Left lung (tissue), 14 donors: ENCODE measurements at regions of chr10 and their contacts with region 1.

Region 1: DNA sequence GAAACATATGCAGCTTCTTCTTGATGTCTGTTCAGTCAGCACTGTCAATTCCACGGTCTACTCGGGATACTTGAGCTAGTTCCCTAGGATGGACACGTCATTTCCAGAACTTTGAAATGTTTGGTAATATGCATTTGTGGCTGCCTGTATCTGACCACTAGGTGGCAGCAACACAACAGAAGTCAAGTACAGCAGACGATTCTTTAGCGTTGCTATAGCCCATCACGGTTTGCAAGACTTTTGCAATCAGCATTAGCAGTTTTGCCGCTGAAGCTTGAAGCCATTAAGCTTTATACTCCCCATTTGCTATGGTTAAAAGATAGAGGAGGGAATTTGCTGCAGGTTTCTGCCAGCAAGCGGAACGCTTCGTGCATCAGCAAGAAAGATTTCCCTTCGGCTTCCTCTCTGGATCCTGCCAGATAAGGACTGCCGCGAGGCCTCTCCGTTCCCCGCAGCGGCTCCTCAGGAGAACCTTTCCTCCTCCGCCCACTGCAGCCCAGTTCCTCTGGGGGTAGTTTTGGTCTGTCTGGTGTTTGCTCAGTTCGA is 63.5 kb downstream of the ABCC2 start:
- DNase-seq: peak; percentile 57 to 89 (median 80)
- ATAC-seq: peak; percentile 99
- H3K4me3 ChIP-seq: peak overlapping the region in 1 of 2 donors; percentile 16
- H3K27ac ChIP-seq: no peak overlapping the region
- H3K4me1 ChIP-seq: peaks cover 4 to 13% of the 10 kb centered on the region in 2 donors
- H3K27me3 ChIP-seq: no peaks in the 10 kb centered on the region
- CTCF ChIP-seq: peak; percentile 84 to 92

Region 2: DNA sequence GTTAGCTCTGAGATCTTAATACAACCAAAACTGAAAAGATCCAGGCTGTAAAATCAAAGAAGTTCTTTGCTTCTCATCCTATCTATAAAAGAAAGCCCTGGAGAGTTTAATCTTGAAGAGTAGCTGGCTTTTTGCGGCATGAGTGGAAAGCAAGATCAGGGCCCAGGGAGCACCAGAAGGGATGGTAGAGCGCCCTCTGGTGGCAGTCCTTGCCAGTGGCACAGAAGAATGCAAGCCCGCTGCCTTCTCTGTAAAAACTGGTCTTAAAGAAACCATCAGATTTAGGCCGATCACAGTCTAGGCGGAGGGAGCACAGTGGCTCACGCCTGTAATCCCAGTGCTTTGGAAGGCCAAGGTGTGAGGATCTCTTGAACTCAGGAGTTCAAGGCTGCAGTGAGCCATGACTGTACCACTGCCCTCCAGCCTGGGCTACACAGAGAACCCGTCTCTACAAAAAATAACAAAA is 200.1 kb after region 1 on chr10:
- intact Hi-C with region 1: loop called in 1 of 2 experiments (anchors 5 kb)
- DNase-seq: peak; percentile 81 to 93 (median 89)
- ATAC-seq: peak; percentile 95
- H3K4me3 ChIP-seq: no peak overlapping the region
- H3K27ac ChIP-seq: no peak overlapping the region
- H3K4me1 ChIP-seq: peaks cover 0 to 8% of the 10 kb centered on the region in 2 donors
- H3K27me3 ChIP-seq: no peaks in the 10 kb centered on the region
- CTCF ChIP-seq: peak; percentile 94 to 98